PC-3 (cell line): ENCODE measurements at regions of chr17 and their contacts with region 1.

Region 1: DNA sequence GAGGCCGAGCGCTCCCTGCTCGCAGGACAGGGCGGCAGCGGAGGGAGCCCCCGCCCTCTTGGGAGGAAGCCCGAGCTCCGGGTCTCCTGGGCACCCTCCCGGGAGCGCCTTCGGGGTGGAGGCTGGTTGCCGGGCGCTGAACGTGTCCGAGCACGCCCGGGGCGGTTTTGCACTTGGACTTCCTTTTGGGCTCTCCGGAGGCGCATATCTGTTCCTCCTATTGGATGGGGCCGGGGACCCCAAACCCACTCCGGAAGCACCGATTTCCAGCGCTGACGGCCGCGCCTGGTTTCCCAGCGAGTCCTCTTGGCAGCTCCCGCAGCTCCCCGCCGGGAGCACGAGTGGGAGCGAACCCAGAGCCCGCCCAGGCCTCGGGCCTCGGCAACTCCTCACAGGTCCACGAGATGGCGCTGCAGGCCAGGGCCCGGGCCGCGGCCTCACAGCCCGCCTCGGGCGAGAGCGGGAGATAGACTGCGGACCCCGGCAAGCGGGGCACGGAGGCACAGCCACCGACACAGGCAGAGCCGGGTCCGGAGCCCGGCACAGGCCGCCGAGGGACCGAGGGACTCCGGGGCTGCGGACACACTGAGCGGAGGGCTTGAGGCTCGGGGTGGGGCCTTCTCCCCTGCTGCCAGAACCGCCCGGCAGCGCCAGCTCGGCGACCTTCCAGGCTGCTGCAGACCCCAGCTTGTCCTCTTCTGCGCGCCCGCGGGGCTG is 12.7 kb downstream of the TBX2 start:
- DNase-seq: peak; percentile 89
- ATAC-seq: peak; percentile 45
- H3K4me3 ChIP-seq: peak overlapping the region; percentile 84
- H3K27ac ChIP-seq: peak overlapping the region; percentile 81
- H3K4me1 ChIP-seq: peaks cover 31% of the 10 kb centered on the region
- H3K27me3 ChIP-seq: no peaks in the 10 kb centered on the region
- CTCF ChIP-seq: peak; percentile 98

Region 2: GRCh38 chr17:60720763-60721531 is 691.4 kb before region 1 on chr17:
- CTCF ChIA-PET with region 1: interaction called, 3 read pairs
- POLR2A ChIA-PET with region 1: no interaction called
- intact Hi-C with region 1: loop called (anchors 1 kb)
- DNase-seq: peak; percentile 83
- ATAC-seq: peak; percentile 82
- H3K4me3 ChIP-seq: no peak overlapping the region
- H3K27ac ChIP-seq: no peak overlapping the region
- H3K4me1 ChIP-seq: no peaks in the 10 kb centered on the region; the same call in 1 of the 2 replicates
- H3K27me3 ChIP-seq: no peaks in the 10 kb centered on the region
- CTCF ChIP-seq: peak; percentile 99

Region 3: DNA sequence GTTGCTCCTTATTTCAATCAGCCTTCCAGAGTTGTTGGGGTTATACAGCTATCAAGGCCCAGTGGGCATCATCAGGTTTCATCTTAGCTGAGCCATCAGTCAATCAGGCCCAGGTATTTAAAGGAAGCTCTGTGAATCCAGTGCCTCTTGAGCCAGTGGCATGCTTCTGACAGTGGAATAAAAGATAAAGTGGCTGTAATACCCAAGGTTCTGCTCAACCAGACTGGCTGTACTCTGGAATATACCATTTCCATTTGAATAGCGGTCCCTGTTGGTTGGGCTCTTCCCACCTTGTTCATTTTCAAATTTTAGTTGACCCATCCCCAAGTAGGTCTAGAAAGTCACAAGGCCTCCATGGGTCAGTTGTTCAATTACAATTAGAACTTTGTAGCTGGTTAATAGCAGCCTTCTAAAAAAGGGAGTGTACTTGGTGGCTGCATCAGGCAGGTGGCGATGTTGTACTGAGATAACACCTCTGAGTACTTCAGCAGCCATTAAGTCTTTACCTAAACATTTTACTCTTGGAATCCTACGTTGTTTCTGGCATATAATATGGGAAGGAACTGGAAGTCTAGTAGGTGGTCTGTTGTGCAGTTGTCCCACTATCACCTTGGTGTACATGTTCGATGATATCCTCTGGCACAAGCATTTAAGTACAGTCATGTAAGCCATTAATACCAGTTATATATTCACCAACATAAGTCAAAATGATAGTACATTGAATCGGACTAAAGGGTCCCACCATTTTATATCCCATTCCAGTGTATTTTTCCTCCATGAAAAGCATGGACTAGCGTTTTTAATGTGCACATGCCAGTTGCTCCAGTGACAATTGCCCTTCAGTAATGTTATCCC is 440.6 kb before region 1 on chr17:
- CTCF ChIA-PET with region 1: interaction called, 8 read pairs
- POLR2A ChIA-PET with region 1: no interaction called
- intact Hi-C with region 1: loop called (anchors 1 kb)
- DNase-seq: peak; percentile 76
- ATAC-seq: peak; percentile 97
- H3K4me3 ChIP-seq: no peak overlapping the region
- H3K27ac ChIP-seq: no peak overlapping the region
- H3K4me1 ChIP-seq: no peaks in the 10 kb centered on the region
- H3K27me3 ChIP-seq: no peaks in the 10 kb centered on the region
- CTCF ChIP-seq: peak; percentile 97

Region 4: GRCh38 chr17:61451538-61452300 is 39.4 kb after region 1 on chr17:
- CTCF ChIA-PET with region 1: no interaction called
- POLR2A ChIA-PET with region 1: no interaction called
- intact Hi-C with region 1: no loop called
- DNase-seq: no peak
- ATAC-seq: no peak
- H3K4me3 ChIP-seq: no peak overlapping the region
- H3K27ac ChIP-seq: no peak overlapping the region
- H3K4me1 ChIP-seq: no peaks in the 10 kb centered on the region
- H3K27me3 ChIP-seq: no peaks in the 10 kb centered on the region
- CTCF ChIP-seq: no peak

Region 5: GRCh38 chr17:61551255-61551742 is 139.0 kb after region 1 on chr17:
- CTCF ChIA-PET with region 1: interaction called, 9 read pairs
- POLR2A ChIA-PET with region 1: no interaction called
- intact Hi-C with region 1: loop called (anchors 1 kb)
- DNase-seq: peak; percentile 84
- ATAC-seq: peak; percentile 94
- H3K4me3 ChIP-seq: no peak overlapping the region
- H3K27ac ChIP-seq: no peak overlapping the region
- H3K4me1 ChIP-seq: peaks cover 1% of the 10 kb centered on the region
- H3K27me3 ChIP-seq: no peaks in the 10 kb centered on the region
- CTCF ChIP-seq: peak; percentile 94

Region 6: DNA sequence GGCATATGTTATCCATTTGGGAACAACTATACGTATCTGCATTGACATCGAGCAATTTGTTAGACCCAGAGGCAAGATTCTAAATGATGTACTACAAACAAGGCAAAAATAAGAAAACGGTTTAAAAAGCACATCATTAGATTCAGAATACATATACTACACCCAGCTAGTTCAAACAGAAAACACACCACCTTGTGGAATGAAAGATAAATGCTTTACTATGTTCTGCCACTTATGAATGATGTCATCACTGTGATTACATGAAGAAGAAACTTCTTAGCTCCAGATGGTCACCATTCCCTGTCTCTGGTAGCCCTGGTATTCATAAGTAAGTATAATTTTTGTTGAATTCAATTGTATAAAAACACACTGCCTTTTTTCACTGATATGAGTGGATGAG is 170.9 kb after region 1 on chr17:
- CTCF ChIA-PET with region 1: interaction called, 18 read pairs
- POLR2A ChIA-PET with region 1: no interaction called
- intact Hi-C with region 1: loop called (anchors 1 kb)
- DNase-seq: peak; percentile 86
- ATAC-seq: peak; percentile 66
- H3K4me3 ChIP-seq: no peak overlapping the region
- H3K27ac ChIP-seq: no peak overlapping the region
- H3K4me1 ChIP-seq: peaks cover 30% of the 10 kb centered on the region
- H3K27me3 ChIP-seq: no peaks in the 10 kb centered on the region
- CTCF ChIP-seq: peak; percentile 83

Region 7: DNA sequence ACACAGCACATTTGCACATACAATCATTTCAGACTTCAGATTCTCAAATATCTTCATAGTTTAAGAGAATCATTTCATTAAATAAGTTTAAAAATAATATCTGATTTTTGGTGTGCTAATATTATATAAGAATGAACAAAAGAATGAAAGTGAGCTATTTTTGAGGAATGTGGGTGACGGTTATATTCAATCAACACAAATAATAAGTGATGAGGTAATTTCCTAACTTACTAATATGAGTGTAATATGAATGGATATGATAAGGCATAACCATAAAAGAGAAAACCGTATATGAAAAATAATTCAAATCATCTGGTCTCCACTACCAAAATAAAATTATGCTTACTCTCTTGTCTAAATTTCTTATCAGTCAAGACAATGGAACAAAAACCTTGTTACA is 247.1 kb after region 1 on chr17:
- CTCF ChIA-PET with region 1: no interaction called
- POLR2A ChIA-PET with region 1: no interaction called
- intact Hi-C with region 1: no loop called
- DNase-seq: no peak
- ATAC-seq: no peak
- H3K4me3 ChIP-seq: no peak overlapping the region
- H3K27ac ChIP-seq: no peak overlapping the region
- H3K4me1 ChIP-seq: no peaks in the 10 kb centered on the region
- H3K27me3 ChIP-seq: no peaks in the 10 kb centered on the region
- CTCF ChIP-seq: no peak

Region 8: GRCh38 chr17:61689610-61690180 is 277.4 kb after region 1 on chr17:
- CTCF ChIA-PET with region 1: no interaction called
- POLR2A ChIA-PET with region 1: no interaction called
- intact Hi-C with region 1: loop called (anchors 10 kb)
- DNase-seq: peak; percentile 43
- ATAC-seq: peak; percentile 76
- H3K4me3 ChIP-seq: no peak overlapping the region
- H3K27ac ChIP-seq: no peak overlapping the region
- H3K4me1 ChIP-seq: no peaks in the 10 kb centered on the region
- H3K27me3 ChIP-seq: no peaks in the 10 kb centered on the region
- CTCF ChIP-seq: no peak